Activated CD4-positive, alpha-beta T cell treated with anti-CD3 and anti-CD28 coated beads, Interleukin-2, amount 10 ng/mL, durations not matched to agents 7 days and 5 days (primary cell): ENCODE measurements at regions of chr16 and their contacts with region 1.

Region 1: GRCh38 chr16:24054741-24055491 is 201.2 kb upstream of the CACNG3 start:
- DNase-seq: no peak
- H3K4me3 Mint-ChIP-seq: no peak overlapping the region
- H3K27ac Mint-ChIP-seq: no peak overlapping the region
- H3K4me1 Mint-ChIP-seq: no peaks in the 10 kb centered on the region
- H3K27me3 Mint-ChIP-seq: no peaks in the 10 kb centered on the region

Region 2: GRCh38 chr16:23930791-23931190 is 124.1 kb before region 1 on chr16:
- CTCF ChIA-PET with region 1: no interaction called
- POLR2A ChIA-PET with region 1: no interaction called
- DNase-seq: no peak
- H3K4me3 Mint-ChIP-seq: no peak overlapping the region
- H3K27ac Mint-ChIP-seq: no peak overlapping the region
- H3K4me1 Mint-ChIP-seq: peaks cover 13% of the 10 kb centered on the region
- H3K27me3 Mint-ChIP-seq: no peaks in the 10 kb centered on the region

Region 3: DNA sequence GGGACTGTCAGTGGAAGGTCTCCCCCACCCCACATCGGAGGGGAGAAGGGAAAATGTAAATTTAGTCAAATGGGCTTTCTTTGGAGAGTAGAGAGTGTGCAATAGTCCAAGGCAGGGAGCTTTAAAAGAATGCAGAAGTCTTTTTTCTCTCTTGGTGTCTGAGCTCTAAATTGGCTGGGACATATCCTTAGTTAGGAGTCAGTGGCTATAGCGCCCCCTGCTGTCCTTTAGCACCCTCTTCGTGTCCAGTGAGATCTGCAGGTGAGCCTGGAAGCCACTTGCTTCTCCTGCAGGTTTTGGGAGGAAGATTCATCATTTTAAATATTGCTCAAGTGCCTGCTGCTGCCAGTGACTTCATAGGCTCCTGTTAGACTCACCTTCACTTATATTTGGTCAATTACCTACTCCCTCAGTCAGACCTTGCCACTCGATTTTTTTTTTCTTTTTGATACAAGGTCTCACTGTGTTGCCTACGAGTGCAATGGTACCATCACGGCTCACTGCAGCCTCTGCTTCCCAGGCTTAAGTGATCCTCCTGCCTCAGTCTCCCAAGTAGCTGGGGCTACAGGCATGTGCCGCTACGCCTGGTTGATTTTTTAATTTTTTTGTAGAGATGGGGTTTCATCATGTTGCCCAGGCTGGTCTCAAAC is 44.4 kb before region 1 on chr16:
- CTCF ChIA-PET with region 1: no interaction called
- POLR2A ChIA-PET with region 1: no interaction called
- DNase-seq: peak; percentile 88
- H3K4me3 Mint-ChIP-seq: no peak overlapping the region
- H3K27ac Mint-ChIP-seq: no peak overlapping the region
- H3K4me1 Mint-ChIP-seq: peaks cover 60% of the 10 kb centered on the region
- H3K27me3 Mint-ChIP-seq: no peaks in the 10 kb centered on the region

Region 4: GRCh38 chr16:24070851-24071250 is 15.9 kb after region 1 on chr16:
- CTCF ChIA-PET with region 1: interaction called, 10 read pairs
- POLR2A ChIA-PET with region 1: no interaction called
- DNase-seq: peak; percentile 30
- H3K4me3 Mint-ChIP-seq: no peak overlapping the region
- H3K27ac Mint-ChIP-seq: no peak overlapping the region
- H3K4me1 Mint-ChIP-seq: peaks cover 26% of the 10 kb centered on the region
- H3K27me3 Mint-ChIP-seq: no peaks in the 10 kb centered on the region